ENCODE measurements at regions of chr22 and their contacts with region 1.

Region 1: GRCh38 chr22:41381329-41382097 is at the start of gene TEF:
- DNase-seq: peak; percentile 98
- H3K4me3 ChIP-seq: peak within 1 kb of the TSS; percentile 51 to 66 (median 66)
- H3K27ac ChIP-seq: peak within 1 kb of the TSS; percentile 79
- H3K4me1 ChIP-seq: peaks cover 11% of the 10 kb centered on the region
- H3K27me3 ChIP-seq: peaks cover 0 to 5% of the 10 kb centered on the region in 2 experiments
- CTCF ChIP-seq: no peak
- POLR2A ChIP-seq: no peak
- total RNA-seq, gene TEF: 2.2 and 2.9 TPM in 2 replicates

Region 2: GRCh38 chr22:41197038-41197972 is 184.2 kb before region 1 on chr22:
- CTCF ChIA-PET with region 1: no interaction called
- POLR2A ChIA-PET with region 1: no interaction called
- dilution Hi-C with region 1: no loop called
- intact Hi-C with region 1: loop called (anchors 5 kb)
- DNase-seq: peak; percentile 75
- H3K4me3 ChIP-seq: peak overlapping the region; percentile 22 to 65 (median 31)
- H3K27ac ChIP-seq: no peak overlapping the region
- H3K4me1 ChIP-seq: peaks cover 5% of the 10 kb centered on the region
- H3K27me3 ChIP-seq: no peaks in the 10 kb centered on the region
- CTCF ChIP-seq: peak in 1 of 2 donors; percentile 10
- POLR2A ChIP-seq: no peak

Region 3: DNA sequence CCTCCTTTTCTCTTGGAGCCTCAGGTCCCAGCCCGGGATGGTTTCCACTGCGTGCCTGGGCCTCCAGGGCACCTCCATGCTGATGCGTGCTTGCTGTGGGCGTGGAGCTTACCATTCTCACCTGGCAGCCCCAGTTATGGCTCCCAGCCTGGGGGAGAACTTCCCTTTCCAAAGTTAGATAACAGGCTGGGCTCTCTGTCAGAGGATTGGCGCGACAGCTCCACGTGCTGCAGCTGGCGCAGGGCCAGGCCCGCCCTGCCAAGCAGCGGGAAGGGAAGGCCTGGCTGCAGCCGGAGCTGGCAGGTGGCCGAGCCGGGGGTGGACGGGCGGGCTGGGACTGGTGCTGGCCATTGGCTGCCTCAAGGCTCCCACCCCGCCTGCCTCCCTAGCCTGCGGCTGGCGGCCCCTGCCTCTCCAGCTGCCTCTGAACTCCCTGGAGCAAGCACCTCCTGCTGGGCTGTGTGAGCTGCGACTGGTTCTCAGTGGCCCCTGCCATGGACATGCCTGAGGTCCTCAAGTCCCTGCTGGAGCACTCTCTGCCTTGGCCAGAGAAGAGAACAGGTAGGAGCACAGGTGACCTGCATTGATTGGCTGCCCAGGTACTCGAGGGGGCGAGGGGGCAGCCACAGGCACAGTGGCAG is 14.4 kb before region 1 on chr22:
- CTCF ChIA-PET with region 1: interaction called, 20 read pairs
- POLR2A ChIA-PET with region 1: interaction called, 11 read pairs
- dilution Hi-C with region 1: no loop called
- intact Hi-C with region 1: no loop called
- DNase-seq: peak; percentile 96
- H3K4me3 ChIP-seq: no peak overlapping the region
- H3K27ac ChIP-seq: no peak overlapping the region
- H3K4me1 ChIP-seq: peaks cover 7% of the 10 kb centered on the region
- H3K27me3 ChIP-seq: no peaks in the 10 kb centered on the region
- CTCF ChIP-seq: peak; percentile 30 to 66
- POLR2A ChIP-seq: no peak

Region 4: DNA sequence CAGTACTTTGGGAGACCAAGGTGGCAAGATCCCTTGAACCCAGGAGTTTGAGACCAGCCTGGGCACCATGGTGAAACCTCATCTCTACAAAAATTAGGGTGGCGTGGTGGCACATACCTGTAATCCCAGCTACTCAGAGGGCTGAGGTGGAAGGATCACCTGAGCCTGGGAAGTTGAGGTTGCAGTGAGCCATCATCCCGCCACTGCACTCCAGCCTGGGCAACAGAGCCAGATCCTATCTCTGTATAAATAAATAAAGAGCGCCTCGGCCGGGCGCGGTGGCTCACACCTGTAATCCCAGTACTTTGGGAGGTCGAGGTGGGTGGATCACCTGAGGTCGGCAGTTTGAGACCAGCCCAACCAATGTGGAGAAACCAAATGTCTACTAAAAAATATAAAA is 37.2 kb after region 1 on chr22:
- CTCF ChIA-PET with region 1: no interaction called
- POLR2A ChIA-PET with region 1: no interaction called
- dilution Hi-C with region 1: no loop called
- intact Hi-C with region 1: no loop called
- DNase-seq: no peak
- H3K4me3 ChIP-seq: no peak overlapping the region
- H3K27ac ChIP-seq: no peak overlapping the region
- H3K4me1 ChIP-seq: peaks cover 13% of the 10 kb centered on the region
- H3K27me3 ChIP-seq: no peaks in the 10 kb centered on the region
- CTCF ChIP-seq: no peak
- POLR2A ChIP-seq: no peak

Region 5: GRCh38 chr22:41437198-41437597 is 55.7 kb after region 1 on chr22:
- CTCF ChIA-PET with region 1: no interaction called
- POLR2A ChIA-PET with region 1: no interaction called
- dilution Hi-C with region 1: no loop called
- intact Hi-C with region 1: no loop called
- DNase-seq: no peak
- H3K4me3 ChIP-seq: no peak overlapping the region
- H3K27ac ChIP-seq: no peak overlapping the region
- H3K4me1 ChIP-seq: no peaks in the 10 kb centered on the region
- H3K27me3 ChIP-seq: no peaks in the 10 kb centered on the region
- CTCF ChIP-seq: no peak
- POLR2A ChIP-seq: no peak

Region 6: GRCh38 chr22:41468381-41469217 is 87.1 kb after region 1 on chr22 and contains the starts of genes ACO2 and PHF5A:
- CTCF ChIA-PET with region 1: no interaction called
- POLR2A ChIA-PET with region 1: interaction called, 25 read pairs
- dilution Hi-C with region 1: no loop called
- intact Hi-C with region 1: loop called (anchors 1 kb)
- DNase-seq: peak; percentile 99
- H3K4me3 ChIP-seq: peak within 1 kb of the TSS; percentile 78 to 96 (median 81)
- H3K27ac ChIP-seq: peak within 1 kb of the TSS; percentile 83
- H3K4me1 ChIP-seq: peaks cover 17% of the 10 kb centered on the region
- H3K27me3 ChIP-seq: no peaks in the 10 kb centered on the region
- CTCF ChIP-seq: no peak
- POLR2A ChIP-seq: peak; percentile 64
- total RNA-seq, gene ACO2: 79.1 and 79.7 TPM in 2 replicates
- total RNA-seq, gene PHF5A: 55.9 and 63.7 TPM in 2 replicates